Right ventricle myocardium superior (tissue), 1 donor: ENCODE measurements at regions of chr22 and their contacts with region 1.

Region 1: GRCh38 chr22:38114484-38115398 is 4.3 kb upstream of the BAIAP2L2 start:
- DNase-seq: peak; percentile 92
- ATAC-seq: peak; percentile 95

Region 2: DNA sequence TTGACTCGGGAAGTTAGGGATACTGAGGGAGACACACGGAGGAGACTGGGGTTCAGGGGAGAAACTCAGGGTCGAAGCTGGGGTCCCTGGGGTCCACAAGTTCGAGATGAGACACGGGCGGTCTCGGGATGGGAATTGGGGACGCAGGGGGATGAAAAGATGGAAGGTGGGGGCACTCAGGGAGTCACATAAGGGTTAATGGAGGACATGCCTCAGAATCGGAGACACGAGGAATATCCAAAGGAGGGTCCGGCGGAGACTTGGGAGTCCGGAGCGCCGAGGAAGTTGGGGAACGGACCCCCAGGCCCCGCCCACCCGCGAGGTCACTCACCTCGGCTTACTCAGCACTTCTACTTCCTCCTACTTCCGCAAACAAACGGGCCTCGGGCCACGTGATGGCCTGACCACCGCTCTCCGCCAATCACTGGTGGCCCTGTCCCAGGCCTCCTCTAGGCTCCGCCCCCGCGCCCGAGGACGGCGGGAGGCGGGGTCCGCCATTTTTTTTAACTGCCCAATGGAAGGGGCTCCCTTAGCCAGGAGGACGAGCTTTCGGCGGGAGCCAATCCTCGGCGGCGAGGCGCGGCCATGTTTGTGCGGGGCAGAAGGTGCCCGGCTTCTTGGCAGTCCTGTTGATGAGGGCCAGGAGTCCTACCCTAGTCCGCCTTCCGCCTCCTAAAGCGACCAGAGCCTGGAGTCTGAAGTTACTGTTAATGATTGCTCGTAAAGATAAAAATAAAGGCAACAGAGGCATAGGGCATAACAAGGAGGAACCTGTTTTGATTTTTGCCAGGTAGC is 66.9 kb after region 1 on chr22 and contains the start of gene PLA2G6:
- intact Hi-C with region 1: no loop called
- DNase-seq: peak; percentile 99
- ATAC-seq: peak; percentile 96
- total RNA-seq, gene PLA2G6: 12.0 TPM

Region 3: GRCh38 chr22:38228873-38229740 is 114.4 kb after region 1 on chr22:
- intact Hi-C with region 1: loop called (anchors 5 kb)
- DNase-seq: peak; percentile 71
- ATAC-seq: peak; percentile 36

Region 4: GRCh38 chr22:38347897-38348750 is 233.4 kb after region 1 on chr22:
- intact Hi-C with region 1: loop called (anchors 10 kb)
- DNase-seq: no peak
- ATAC-seq: no peak